AG04450 (cell line): ENCODE measurements at regions of chr7 and their contacts with region 1.

Region 1: GRCh38 chr7:72805526-72806494 is 22.2 kb downstream of the TYW1B start:
- DNase-seq: no peak
- H3K4me3 ChIP-seq: no peak overlapping the region
- H3K27ac ChIP-seq: peak overlapping the region; percentile 33
- H3K27me3 ChIP-seq: no peaks in the 10 kb centered on the region
- CTCF ChIP-seq: no peak

Region 2: DNA sequence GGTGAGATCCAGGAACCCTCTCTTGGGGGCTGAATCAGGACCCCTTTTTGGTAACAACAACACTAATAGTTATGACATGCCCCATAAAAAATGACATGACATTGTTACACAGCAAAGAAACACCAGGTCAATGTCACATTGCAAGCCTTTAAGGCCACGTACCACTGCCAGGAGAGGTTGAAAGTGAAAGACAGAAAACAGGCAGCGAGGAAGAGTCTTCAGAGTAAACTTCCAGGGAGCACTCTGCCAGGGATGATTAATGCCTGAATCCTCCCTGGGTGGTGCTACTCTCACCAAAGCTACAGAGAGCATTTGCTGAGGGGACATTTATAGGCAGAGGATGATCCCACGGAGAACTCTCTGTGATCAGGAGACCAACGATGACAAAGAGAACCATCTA is 945.2 kb before region 1 on chr7:
- CTCF ChIA-PET with region 1: interaction called, 10 read pairs
- POLR2A ChIA-PET with region 1: no interaction called
- DNase-seq: no peak
- H3K4me3 ChIP-seq: no peak overlapping the region
- H3K27ac ChIP-seq: no peak overlapping the region
- H3K27me3 ChIP-seq: no peaks in the 10 kb centered on the region
- CTCF ChIP-seq: no peak

Region 3: DNA sequence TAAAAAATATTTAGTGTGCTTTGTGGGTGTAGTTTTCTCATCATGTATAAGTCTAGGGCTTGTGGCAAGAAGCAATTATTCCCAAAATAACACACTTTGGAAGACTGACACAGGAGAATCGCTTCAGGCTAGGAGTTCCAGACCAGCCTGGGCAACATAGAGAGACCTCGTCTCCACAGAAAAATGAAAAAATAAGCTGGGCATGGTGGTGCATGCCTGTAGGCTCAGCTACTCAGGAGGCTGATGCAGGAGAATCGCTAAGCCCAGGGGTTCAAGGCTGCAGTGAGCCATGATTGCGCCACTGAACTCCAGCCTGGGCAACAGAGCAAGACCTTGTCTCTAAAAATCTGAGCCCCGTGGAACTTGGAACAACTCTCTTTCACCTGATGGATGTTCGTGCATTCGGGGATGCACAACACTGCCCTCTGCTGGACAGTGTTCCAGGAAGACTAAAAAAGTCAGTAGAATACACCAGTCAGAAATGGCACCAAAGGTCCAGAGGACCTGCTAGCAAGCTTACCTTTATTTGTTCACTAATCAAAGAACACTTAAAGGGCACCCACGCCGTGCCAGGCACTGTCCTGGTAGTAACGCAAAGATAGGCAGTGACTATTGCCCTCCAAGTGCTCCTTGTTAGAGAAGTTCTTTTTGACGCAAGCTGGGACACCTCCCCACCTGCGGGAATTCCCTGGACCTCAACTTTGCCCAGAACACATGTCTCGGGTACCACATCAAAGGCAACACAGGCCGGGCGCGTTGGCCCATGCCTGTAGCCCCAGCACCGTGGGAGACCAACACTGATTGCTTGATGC is 311.8 kb before region 1 on chr7:
- CTCF ChIA-PET with region 1: no interaction called
- POLR2A ChIA-PET with region 1: no interaction called
- DNase-seq: no peak
- H3K4me3 ChIP-seq: no peak overlapping the region
- H3K27ac ChIP-seq: no peak overlapping the region
- H3K27me3 ChIP-seq: no peaks in the 10 kb centered on the region
- CTCF ChIP-seq: peak; percentile 64

Region 4: GRCh38 chr7:72785166-72785955 is 20.4 kb before region 1 on chr7:
- CTCF ChIA-PET with region 1: interaction called, 10 read pairs
- POLR2A ChIA-PET with region 1: no interaction called
- DNase-seq: no peak
- H3K4me3 ChIP-seq: no peak overlapping the region
- H3K27ac ChIP-seq: no peak overlapping the region
- H3K27me3 ChIP-seq: no peaks in the 10 kb centered on the region
- CTCF ChIP-seq: no peak